Naive thymus-derived CD4-positive, alpha-beta T cell (primary cell): ENCODE measurements at regions of chr17 and their contacts with region 1.

Region 1: DNA sequence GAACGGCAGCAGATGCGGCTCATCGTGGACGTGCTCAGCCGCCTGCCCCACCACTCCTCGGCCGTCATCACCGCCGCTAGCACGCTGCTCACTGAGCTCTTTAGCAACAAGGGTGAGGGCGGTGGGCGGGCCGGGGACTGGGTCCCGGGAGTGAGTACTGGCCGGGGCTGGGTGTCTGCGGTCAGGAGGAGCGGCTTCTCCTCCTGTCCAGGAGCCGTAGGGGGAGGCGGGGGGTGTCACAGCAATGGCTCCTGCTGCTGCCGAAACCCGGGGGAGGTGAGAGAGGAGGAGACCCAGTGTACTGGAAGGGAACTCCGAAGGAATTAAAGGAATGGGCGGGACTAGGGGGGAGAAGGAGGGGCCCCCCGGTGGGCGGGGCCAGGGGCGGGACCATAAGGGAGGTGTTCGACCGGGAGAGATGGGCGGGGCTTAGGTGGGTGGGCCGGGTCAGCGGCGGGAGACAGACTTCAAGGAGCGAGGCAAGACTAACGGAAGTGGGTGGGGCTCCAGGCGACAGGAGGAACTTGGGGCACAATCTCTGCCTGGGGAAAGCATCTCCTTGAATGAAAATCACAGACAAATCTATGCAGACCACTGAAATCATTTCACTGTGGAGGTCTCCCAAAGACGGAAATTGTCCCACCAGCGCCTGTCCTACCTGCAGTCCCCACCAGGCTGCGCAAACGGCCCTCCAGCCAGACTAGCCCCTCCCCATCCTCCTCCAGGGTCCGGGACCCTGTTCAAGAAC is 2.4 kb downstream of the NAGS start:
- DNase-seq: peak; percentile 77 to 95 (median 86)
- ATAC-seq: peak; percentile 96
- H3K4me3 ChIP-seq: peak overlapping the region; percentile 89
- H3K4me3 Mint-ChIP-seq: peak overlapping the region; percentile 86 to 94 (median 90)
- H3K27ac ChIP-seq: peak overlapping the region; percentile 60
- H3K27ac Mint-ChIP-seq: peak overlapping the region; percentile 44 to 88 (median 68)
- H3K4me1 ChIP-seq: peaks cover 19 to 26% of the 10 kb centered on the region in 2 donors
- H3K4me1 Mint-ChIP-seq: peaks cover 16 to 30% (median 25%) of the 10 kb centered on the region in 7 donors
- H3K27me3 ChIP-seq: no peaks in the 10 kb centered on the region
- H3K27me3 Mint-ChIP-seq: peaks cover 0 to 30% (median 4%) of the 10 kb centered on the region in 5 donors

Region 2: DNA sequence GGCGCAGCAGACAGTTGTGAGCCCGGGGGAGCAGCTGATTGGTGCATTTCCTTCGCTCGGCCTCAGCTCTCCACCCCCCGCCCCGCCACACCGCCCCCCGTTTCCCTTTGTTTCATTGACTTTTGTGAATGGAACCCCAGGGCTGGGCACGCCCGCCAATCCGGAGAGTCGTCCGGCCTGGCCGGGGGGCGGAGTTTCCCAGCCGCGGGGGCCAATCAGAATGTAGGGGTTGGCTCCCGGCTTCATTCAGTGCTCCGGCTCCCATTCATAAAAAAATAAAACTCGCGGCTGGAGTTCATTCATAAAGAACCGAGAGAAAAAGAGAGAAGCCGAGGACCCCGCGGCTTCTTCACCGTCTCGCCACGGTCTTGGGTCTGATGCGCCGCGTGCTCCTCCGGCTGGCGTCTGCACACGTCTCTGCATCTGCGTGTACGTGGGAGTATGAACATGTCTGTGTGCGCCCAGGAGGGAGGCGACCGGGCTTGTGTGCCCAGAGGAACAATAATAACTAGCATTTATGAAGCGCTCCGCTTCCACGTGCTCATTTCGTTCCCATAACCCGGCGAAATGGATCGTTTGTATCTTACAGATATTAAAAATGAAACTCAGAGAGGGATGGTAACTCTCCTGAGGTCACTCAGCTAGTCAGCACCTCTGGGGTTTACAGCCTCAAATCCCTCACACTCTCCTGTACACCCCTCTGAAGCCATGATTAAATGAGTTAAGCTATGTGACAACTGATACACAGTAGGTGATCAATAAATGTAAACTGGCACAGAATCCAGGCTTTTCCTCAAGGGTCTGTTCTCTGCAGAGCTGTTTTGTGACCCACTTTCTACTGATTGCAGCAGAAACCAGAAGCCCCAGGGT is 460.2 kb before region 1 on chr17 and contains the start of gene ETV4:
- CTCF ChIA-PET with region 1: no interaction called
- POLR2A ChIA-PET with region 1: no interaction called
- intact Hi-C with region 1: loop called in 1 of 2 experiments (anchors 2 kb)
- DNase-seq: peak; percentile 67 to 94 (median 85)
- ATAC-seq: peak; percentile 93
- H3K4me3 ChIP-seq: peak within 1 kb of the TSS; percentile 62
- H3K4me3 Mint-ChIP-seq: peak within 1 kb of the TSS; percentile 83 to 97 (median 87)
- H3K27ac ChIP-seq: no peak within 1 kb of the TSS
- H3K27ac Mint-ChIP-seq: peak within 1 kb of the TSS in 6 of 9 donors; percentile 40 to 89 (median 71)
- H3K4me1 ChIP-seq: peaks cover 13 to 14% of the 10 kb centered on the region in 2 donors
- H3K4me1 Mint-ChIP-seq: peaks cover 18 to 26% (median 22%) of the 10 kb centered on the region in 7 donors
- H3K27me3 ChIP-seq: peaks cover 10 to 38% of the 10 kb centered on the region in 2 donors
- H3K27me3 Mint-ChIP-seq: peaks cover 47 to 69% (median 50%) of the 10 kb centered on the region in 5 donors
- total RNA-seq, gene ETV4: 0.85 TPM in 1 of 5 experiments, not detected in the others

Region 3: GRCh38 chr17:43673516-43674323 is 333.1 kb before region 1 on chr17:
- CTCF ChIA-PET with region 1: no interaction called
- POLR2A ChIA-PET with region 1: no interaction called
- intact Hi-C with region 1: no loop called
- DNase-seq: peak; percentile 31 to 71 (median 59)
- ATAC-seq: peak; percentile 74
- H3K4me3 ChIP-seq: no peak overlapping the region
- H3K4me3 Mint-ChIP-seq: no peak overlapping the region
- H3K27ac ChIP-seq: no peak overlapping the region
- H3K27ac Mint-ChIP-seq: peak overlapping the region in 2 of 9 donors; percentile 38 to 40
- H3K4me1 ChIP-seq: no peaks in the 10 kb centered on the region
- H3K4me1 Mint-ChIP-seq: peaks cover 8 to 32% (median 15%) of the 10 kb centered on the region in 7 donors
- H3K27me3 ChIP-seq: no peaks in the 10 kb centered on the region
- H3K27me3 Mint-ChIP-seq: peaks cover 0 to 9% (median 3%) of the 10 kb centered on the region in 5 donors

Region 4: GRCh38 chr17:43907425-43907981 is 99.3 kb before region 1 on chr17 and contains the start of gene MPP2:
- CTCF ChIA-PET with region 1: interaction called, 4 read pairs
- POLR2A ChIA-PET with region 1: interaction called, 3 read pairs
- intact Hi-C with region 1: loop called in 1 of 2 experiments (anchors 1 kb)
- DNase-seq: peak; percentile 28 to 76 (median 68)
- ATAC-seq: peak; percentile 73
- H3K4me3 ChIP-seq: peak within 1 kb of the TSS; percentile 78
- H3K4me3 Mint-ChIP-seq: peak within 1 kb of the TSS; percentile 70 to 95 (median 89)
- H3K27ac ChIP-seq: peak within 1 kb of the TSS; percentile 80
- H3K27ac Mint-ChIP-seq: peak within 1 kb of the TSS in 8 of 9 donors; percentile 45 to 95 (median 89)
- H3K4me1 ChIP-seq: peaks cover 17 to 20% of the 10 kb centered on the region in 2 donors
- H3K4me1 Mint-ChIP-seq: peaks cover 0 to 16% (median 12%) of the 10 kb centered on the region in 7 donors
- H3K27me3 ChIP-seq: peaks cover 0 to 4% of the 10 kb centered on the region in 2 donors
- H3K27me3 Mint-ChIP-seq: peaks cover 0 to 63% (median 5%) of the 10 kb centered on the region in 5 donors
- total RNA-seq, gene MPP2: 0.24 to 9.3 (median 3.7) TPM

Region 5: DNA sequence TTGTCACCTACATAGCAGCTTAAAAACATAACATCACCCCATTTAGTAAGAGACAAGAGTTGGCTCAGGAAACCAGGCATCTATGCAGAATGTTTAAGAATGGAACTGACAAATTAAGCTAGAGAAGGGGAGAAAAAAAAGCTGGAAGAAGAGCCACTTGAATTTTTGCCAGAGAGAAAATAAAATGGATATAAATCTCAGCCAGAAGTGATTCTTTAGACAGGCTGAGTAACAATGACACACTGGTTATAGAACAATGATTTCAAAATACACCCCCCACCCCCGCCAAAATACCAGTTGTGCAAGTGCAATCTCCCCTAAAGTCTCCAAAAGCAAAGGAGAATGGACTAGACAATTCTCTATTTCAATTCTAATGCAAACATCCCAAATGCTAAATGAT is 37.3 kb after region 1 on chr17:
- CTCF ChIA-PET with region 1: no interaction called
- POLR2A ChIA-PET with region 1: no interaction called
- intact Hi-C with region 1: loop called in 1 of 2 experiments (anchors 5 kb)
- DNase-seq: no peak
- ATAC-seq: no peak
- H3K4me3 ChIP-seq: no peak overlapping the region
- H3K4me3 Mint-ChIP-seq: no peak overlapping the region
- H3K27ac ChIP-seq: no peak overlapping the region
- H3K27ac Mint-ChIP-seq: peak overlapping the region in 5 of 9 donors; percentile 2 to 52 (median 7)
- H3K4me1 ChIP-seq: peaks cover 0 to 5% of the 10 kb centered on the region in 2 donors
- H3K4me1 Mint-ChIP-seq: peaks cover 14 to 27% (median 19%) of the 10 kb centered on the region in 7 donors
- H3K27me3 ChIP-seq: no peaks in the 10 kb centered on the region
- H3K27me3 Mint-ChIP-seq: no peaks in the 10 kb centered on the region

Region 6: DNA sequence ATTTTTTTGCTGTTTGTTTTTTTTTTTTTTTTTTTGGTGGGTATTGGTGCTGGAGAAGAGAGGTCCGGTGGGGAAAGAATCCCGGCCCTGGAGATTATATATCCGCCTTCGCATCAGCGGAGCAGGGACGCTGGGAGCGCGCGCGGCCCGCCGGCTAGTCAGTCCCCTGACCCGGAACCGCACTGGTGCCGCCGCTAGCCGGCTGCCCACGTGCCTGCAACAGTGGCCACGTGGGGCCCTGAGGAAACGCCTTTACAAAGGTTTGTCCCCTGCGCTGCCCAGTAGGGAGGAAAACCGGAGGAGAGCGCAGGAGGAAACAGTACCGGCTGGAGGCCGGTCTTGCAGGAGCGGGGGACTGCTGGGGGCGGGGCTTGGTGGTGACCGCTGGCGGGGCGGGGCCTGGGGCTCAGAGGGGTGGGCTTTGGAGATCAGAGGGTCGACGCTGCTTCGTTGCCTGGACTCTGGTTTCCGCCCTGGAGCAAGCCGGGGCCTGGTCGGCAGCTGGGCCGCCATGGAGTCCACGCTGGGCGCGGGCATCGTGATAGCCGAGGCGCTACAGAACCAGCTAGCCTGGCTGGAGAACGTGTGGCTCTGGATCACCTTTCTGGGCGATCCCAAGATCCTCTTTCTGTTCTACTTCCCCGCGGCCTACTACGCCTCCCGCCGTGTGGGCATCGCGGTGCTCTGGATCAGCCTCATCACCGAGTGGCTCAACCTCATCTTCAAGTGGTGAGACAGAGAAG is 63.9 kb after region 1 on chr17 and contains the start of gene G6PC3:
- CTCF ChIA-PET with region 1: no interaction called
- POLR2A ChIA-PET with region 1: no interaction called
- intact Hi-C with region 1: loop called (anchors 2 kb)
- DNase-seq: peak; percentile 35 to 86 (median 49)
- ATAC-seq: peak; percentile 67
- H3K4me3 ChIP-seq: peak within 1 kb of the TSS; percentile 75
- H3K4me3 Mint-ChIP-seq: peak within 1 kb of the TSS; percentile 91 to 97 (median 94)
- H3K27ac ChIP-seq: peak within 1 kb of the TSS; percentile 83
- H3K27ac Mint-ChIP-seq: peak within 1 kb of the TSS; percentile 29 to 96 (median 93)
- H3K4me1 ChIP-seq: peaks cover 21 to 24% of the 10 kb centered on the region in 2 donors
- H3K4me1 Mint-ChIP-seq: peaks cover 31 to 49% (median 36%) of the 10 kb centered on the region in 7 donors
- H3K27me3 ChIP-seq: no peaks in the 10 kb centered on the region
- H3K27me3 Mint-ChIP-seq: no peaks in the 10 kb centered on the region
- total RNA-seq, gene G6PC3: 9.4 to 25.8 (median 13.9) TPM

Region 7: GRCh38 chr17:44235583-44235936 is 228.8 kb after region 1 on chr17:
- CTCF ChIA-PET with region 1: no interaction called
- POLR2A ChIA-PET with region 1: no interaction called
- intact Hi-C with region 1: no loop called
- DNase-seq: no peak
- ATAC-seq: no peak
- H3K4me3 ChIP-seq: no peak overlapping the region
- H3K4me3 Mint-ChIP-seq: no peak overlapping the region
- H3K27ac ChIP-seq: no peak overlapping the region
- H3K27ac Mint-ChIP-seq: no peak overlapping the region
- H3K4me1 ChIP-seq: no peaks in the 10 kb centered on the region
- H3K4me1 Mint-ChIP-seq: peaks cover 0 to 8% (median 4%) of the 10 kb centered on the region in 7 donors
- H3K27me3 ChIP-seq: no peaks in the 10 kb centered on the region
- H3K27me3 Mint-ChIP-seq: peaks cover 0 to 8% (median 0%) of the 10 kb centered on the region in 5 donors